ENCODE measurements at regions of chr12 and their contacts with region 1.

Region 1: GRCh38 chr12:104604070-104604994 is 147.6 kb downstream of the CHST11 start:
- DNase-seq: peak; percentile 60
- H3K4me3 Mint-ChIP-seq: peak overlapping the region; percentile 19
- H3K27ac Mint-ChIP-seq: peak overlapping the region; percentile 86
- H3K4me1 Mint-ChIP-seq: peaks cover 61% of the 10 kb centered on the region
- H3K27me3 Mint-ChIP-seq: no peaks in the 10 kb centered on the region

Region 2: DNA sequence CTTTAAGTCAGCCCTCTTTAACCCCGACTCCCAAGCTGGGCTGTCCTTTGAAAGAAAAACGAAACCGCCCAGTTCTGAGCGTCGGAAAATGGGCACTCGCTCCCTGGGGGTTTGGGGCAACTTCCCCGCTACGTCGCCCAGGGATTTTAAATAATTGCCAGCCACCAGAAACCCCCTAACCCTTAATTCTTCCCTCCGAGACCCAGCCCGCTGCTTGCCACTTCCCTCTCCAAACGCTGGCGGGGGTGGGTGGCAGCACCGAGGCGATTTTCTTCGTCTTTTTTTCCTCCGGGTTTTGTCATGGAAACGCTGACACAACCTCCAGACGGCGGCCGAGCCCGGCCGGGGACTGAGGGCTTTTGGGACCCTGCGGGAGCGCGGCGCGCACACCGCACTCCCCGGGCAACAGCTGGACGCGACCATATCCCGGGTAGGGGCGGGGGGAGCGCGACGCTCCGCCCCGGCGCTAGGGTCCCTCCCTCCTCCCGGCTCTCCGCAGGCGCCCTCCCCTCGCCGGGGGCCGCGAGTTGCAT is 147.8 kb before region 1 on chr12 and contains the start of gene CHST11:
- intact Hi-C with region 1: loop called (anchors 1 kb)
- DNase-seq: peak; percentile 74
- H3K4me3 Mint-ChIP-seq: peak within 1 kb of the TSS; percentile 98
- H3K27ac Mint-ChIP-seq: peak within 1 kb of the TSS; percentile 96
- H3K4me1 Mint-ChIP-seq: peaks cover 31% of the 10 kb centered on the region
- H3K27me3 Mint-ChIP-seq: no peaks in the 10 kb centered on the region
- total RNA-seq, gene CHST11: 41.0 and 50.6 TPM in 2 replicates

Region 3: GRCh38 chr12:104494137-104494792 is 110.1 kb before region 1 on chr12:
- intact Hi-C with region 1: loop called (anchors 2 kb)
- DNase-seq: no peak
- H3K4me3 Mint-ChIP-seq: peak overlapping the region; percentile 56
- H3K27ac Mint-ChIP-seq: peak overlapping the region; percentile 85
- H3K4me1 Mint-ChIP-seq: peaks cover 80% of the 10 kb centered on the region
- H3K27me3 Mint-ChIP-seq: no peaks in the 10 kb centered on the region

Region 4: GRCh38 chr12:104582739-104583138 is 21.6 kb before region 1 on chr12:
- intact Hi-C with region 1: loop called (anchors 1 kb)
- DNase-seq: no peak
- H3K4me3 Mint-ChIP-seq: no peak overlapping the region
- H3K27ac Mint-ChIP-seq: no peak overlapping the region
- H3K4me1 Mint-ChIP-seq: peaks cover 67% of the 10 kb centered on the region
- H3K27me3 Mint-ChIP-seq: no peaks in the 10 kb centered on the region

Region 5: DNA sequence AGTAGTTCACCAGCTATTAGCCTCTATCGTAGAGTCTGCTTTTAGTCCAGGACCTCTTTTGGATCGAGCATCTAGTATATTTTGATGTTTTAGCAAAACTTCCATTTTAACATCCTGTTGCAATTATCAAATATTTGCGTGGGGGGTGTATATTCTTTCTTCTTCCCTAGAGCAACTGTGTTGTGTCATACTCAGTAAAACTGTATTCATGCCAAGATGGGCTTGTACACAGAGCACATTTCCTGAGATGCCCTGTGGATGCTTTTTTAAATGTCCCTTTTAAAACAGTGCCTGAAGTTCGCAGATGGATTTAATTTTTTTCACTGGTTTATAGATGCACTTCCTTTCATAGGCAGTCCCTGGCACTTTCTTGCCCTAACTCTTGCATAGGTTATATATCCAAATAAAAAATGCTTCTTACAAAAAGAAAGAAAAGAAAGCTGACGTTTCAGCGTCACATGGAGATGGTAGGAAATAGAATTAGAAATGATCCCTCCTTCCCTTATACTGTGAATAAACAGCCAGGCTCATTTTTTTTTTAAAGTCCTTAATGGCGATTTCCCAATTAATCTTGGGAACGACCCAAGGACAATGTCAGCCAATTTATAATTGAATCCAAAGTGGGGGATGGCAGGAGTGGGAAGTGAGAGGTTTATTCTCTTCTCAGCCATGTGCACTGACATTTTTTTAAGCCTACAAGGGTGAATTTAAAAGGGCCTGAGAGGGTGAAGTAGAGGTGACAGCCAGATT is 106.8 kb after region 1 on chr12:
- intact Hi-C with region 1: no loop called
- DNase-seq: no peak
- H3K4me3 Mint-ChIP-seq: no peak overlapping the region
- H3K27ac Mint-ChIP-seq: no peak overlapping the region
- H3K4me1 Mint-ChIP-seq: peaks cover 31% of the 10 kb centered on the region
- H3K27me3 Mint-ChIP-seq: no peaks in the 10 kb centered on the region

Region 6: DNA sequence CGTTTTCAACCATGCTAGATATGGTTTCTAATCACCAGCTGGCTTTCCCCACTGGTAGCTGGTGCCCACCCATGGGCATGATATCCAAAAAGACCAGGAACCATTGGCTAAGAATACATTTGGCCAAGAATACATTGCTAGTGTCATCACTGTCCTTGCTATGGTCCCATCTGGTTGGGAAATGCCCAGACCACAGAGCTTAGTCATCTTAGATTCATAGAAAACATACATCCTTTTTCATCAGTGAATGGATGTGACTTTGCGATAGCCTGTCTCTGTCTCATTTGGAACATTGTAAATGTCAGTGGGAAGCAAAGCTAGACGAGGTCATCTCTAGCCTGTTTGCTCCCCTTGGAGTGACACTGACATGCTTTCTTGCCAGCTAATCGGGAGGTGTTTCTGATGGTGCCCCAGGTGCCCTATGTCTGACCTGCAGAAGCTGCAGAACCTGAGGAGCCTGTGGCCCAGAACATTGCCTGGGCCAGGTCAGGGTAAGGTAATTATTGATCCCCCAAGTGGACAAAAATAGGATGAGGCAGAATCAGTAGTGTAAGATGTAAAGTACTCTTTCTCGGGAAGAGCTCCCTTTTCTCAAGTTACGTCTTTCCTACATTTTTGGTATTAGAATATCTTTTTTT is 159.0 kb after region 1 on chr12:
- intact Hi-C with region 1: loop called (anchors 1 kb)
- DNase-seq: no peak
- H3K4me3 Mint-ChIP-seq: peak overlapping the region; percentile 20
- H3K27ac Mint-ChIP-seq: peak overlapping the region; percentile 76
- H3K4me1 Mint-ChIP-seq: peaks cover 22% of the 10 kb centered on the region
- H3K27me3 Mint-ChIP-seq: no peaks in the 10 kb centered on the region

Region 7: GRCh38 chr12:106302401-106303201 is 1698.3 kb after region 1 on chr12 and contains the start of gene TCP11L2:
- intact Hi-C with region 1: loop called (anchors 10 kb)
- DNase-seq: peak; percentile 83
- H3K4me3 Mint-ChIP-seq: peak within 1 kb of the TSS; percentile 94
- H3K27ac Mint-ChIP-seq: peak within 1 kb of the TSS; percentile 100
- H3K4me1 Mint-ChIP-seq: peaks cover 37% of the 10 kb centered on the region
- H3K27me3 Mint-ChIP-seq: no peaks in the 10 kb centered on the region
- total RNA-seq, gene TCP11L2: 4.8 and 5.1 TPM in 2 replicates

Measured in activated T-helper 2 cell treated with anti-CD3 and anti-CD28 coated beads, Interferon-gamma antibody, Interleukin-2, Interleukin-4, amounts not matched to agents 10 μg/mL and 5 μg/mL and 100 μg/mL, durations not matched to agents 14 hours and 24 hours and 36 hours (primary cell).